Ovary (tissue), 10 donors: ENCODE measurements at regions of chr4 and their contacts with region 1.

Region 1: DNA sequence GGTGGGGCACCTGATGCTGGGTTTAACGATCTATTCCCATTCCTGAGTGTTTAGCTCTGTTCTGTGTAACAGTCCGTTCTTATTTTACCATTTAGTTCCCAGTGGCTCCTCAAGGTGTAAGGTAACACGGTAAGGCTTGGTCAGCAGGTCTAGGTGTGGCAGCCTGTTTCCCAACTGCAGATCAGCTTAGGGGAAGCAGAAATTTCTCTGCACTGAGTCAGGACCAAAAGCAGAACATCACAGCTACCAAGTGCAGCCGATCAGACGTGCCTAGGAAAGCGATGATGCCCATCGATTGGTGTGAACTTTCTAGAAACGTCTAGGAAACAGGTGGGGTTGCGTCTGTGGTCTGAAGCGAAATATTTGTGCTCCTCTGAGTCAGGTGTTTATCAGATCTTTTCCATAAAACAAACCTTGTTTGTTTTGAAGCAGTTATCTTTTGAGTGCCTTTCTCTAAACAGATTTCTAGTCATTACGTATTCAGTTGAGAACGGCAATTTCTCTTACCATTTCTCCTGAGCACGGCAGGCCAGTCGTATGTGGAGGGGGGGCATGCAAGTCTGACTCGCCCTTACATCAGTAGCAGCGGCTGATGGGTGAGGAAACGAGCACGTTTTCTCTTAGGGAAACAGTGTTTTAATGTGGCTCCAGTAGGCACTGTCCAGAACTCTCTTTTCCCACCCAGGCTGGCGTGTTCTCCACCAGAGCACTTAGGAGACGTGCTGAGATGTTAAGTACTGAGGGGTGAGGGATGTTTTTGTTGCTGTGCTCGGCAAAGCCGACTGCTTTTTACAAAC is 240.3 kb downstream of the STIM2 start:
- DNase-seq: no peak
- H3K4me3 ChIP-seq: no peak overlapping the region
- H3K27ac ChIP-seq: no peak overlapping the region
- H3K4me1 ChIP-seq: no peaks in the 10 kb centered on the region
- H3K27me3 ChIP-seq: no peaks in the 10 kb centered on the region
- CTCF ChIP-seq: no peak
- EP300 ChIP-seq: no peak
- POLR2A ChIP-seq: no peak

Region 2: GRCh38 chr4:25500626-25501316 is 1600.1 kb before region 1 on chr4:
- intact Hi-C with region 1: loop called in 1 of 4 experiments (anchors 5 kb)
- DNase-seq: no peak
- H3K4me3 ChIP-seq: no peak overlapping the region
- H3K27ac ChIP-seq: no peak overlapping the region
- H3K4me1 ChIP-seq: no peaks in the 10 kb centered on the region
- H3K27me3 ChIP-seq: no peaks in the 10 kb centered on the region
- CTCF ChIP-seq: no peak
- EP300 ChIP-seq: no peak
- POLR2A ChIP-seq: no peak